ENCODE measurements at regions of chr4 and their contacts with region 1.

Region 1: DNA sequence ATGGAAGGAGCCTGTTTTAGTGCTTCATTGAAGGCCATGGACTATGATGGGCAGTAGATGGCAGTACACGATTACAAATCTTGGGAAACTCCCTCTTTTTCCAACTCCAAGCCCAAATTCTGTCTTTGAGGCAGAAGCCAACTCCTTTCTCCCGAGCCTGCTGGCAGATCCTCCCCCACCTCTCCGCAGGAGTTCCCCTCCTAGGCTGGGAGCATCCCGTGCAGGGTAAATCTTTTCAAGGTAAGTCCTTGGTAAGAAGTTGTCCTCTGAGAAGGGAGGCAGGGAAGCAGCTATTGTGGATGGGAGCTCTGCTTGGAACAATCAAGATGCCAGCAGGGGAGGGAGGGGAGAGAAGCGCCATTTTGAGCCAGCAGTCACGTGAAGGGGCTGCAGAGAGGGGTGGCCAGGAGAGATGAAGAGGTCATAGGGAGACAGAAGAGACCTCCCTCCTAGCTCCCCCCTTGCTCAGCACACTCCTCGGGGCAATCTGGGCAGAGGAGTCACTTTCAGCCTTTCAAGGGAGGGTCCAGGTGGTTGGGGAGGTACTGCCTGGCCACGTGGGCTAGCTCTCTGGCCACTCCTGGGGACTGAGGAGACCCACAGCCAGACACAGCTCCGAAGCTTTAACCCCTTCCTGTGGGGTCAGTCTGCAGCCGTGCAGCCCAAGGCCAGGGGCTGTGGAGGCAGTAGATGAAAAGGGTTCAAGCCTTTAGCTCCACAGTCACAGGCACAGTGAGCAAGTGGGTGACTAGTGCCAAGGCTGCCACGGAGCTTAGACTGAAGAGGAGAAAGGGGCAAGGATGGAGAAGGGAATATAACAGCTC is 9.6 kb downstream of the CC2D2A start:
- DNase-seq: peak; percentile 81 to 82
- H3K4me3 ChIP-seq: peak overlapping the region; percentile 37
- H3K4me3 Mint-ChIP-seq: peak overlapping the region; percentile 97
- H3K27ac Mint-ChIP-seq: peak overlapping the region; percentile 96
- H3K4me1 ChIP-seq: no peaks in the 10 kb centered on the region
- H3K4me1 Mint-ChIP-seq: peaks cover 7% of the 10 kb centered on the region
- H3K27me3 ChIP-seq: no peaks in the 10 kb centered on the region
- H3K27me3 Mint-ChIP-seq: no peaks in the 10 kb centered on the region
- CTCF ChIP-seq: peak; percentile 50 to 60

Region 2: DNA sequence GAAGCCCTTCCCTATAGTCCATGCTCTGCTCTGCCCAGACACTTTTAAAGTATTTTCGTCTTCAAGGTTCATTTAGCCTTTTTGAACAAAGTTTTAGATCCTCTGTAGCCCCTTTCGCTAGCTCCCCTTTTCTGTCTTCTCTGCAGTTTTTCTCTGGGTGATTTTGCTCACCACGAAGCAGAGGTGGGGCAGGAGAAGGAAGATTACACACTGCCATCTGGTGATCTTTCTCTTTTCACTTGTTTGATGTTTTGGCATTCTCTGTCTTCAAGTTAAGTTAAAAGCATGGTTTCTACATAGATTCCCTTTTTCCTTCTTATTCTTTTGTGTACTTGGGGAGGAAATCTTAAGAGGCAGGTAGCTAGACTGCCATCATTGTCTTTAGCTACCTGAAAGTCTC is 34.2 kb after region 1 on chr4:
- CTCF ChIA-PET with region 1: interaction called, 4 read pairs
- POLR2A ChIA-PET with region 1: no interaction called
- intact Hi-C with region 1: loop called (anchors 1 kb)
- DNase-seq: no peak
- H3K4me3 ChIP-seq: no peak overlapping the region
- H3K4me3 Mint-ChIP-seq: no peak overlapping the region
- H3K27ac Mint-ChIP-seq: no peak overlapping the region
- H3K4me1 ChIP-seq: no peaks in the 10 kb centered on the region
- H3K4me1 Mint-ChIP-seq: no peaks in the 10 kb centered on the region
- H3K27me3 ChIP-seq: no peaks in the 10 kb centered on the region
- H3K27me3 Mint-ChIP-seq: no peaks in the 10 kb centered on the region
- CTCF ChIP-seq: no peak

Region 3: GRCh38 chr4:15649914-15650545 is 170.7 kb after region 1 on chr4:
- CTCF ChIA-PET with region 1: interaction called, 14 read pairs
- POLR2A ChIA-PET with region 1: interaction called, 7 read pairs
- intact Hi-C with region 1: loop called (anchors 1 kb)
- DNase-seq: peak; percentile 60 to 69
- H3K4me3 ChIP-seq: no peak overlapping the region
- H3K4me3 Mint-ChIP-seq: no peak overlapping the region
- H3K27ac Mint-ChIP-seq: no peak overlapping the region
- H3K4me1 ChIP-seq: peaks cover 8% of the 10 kb centered on the region
- H3K4me1 Mint-ChIP-seq: peaks cover 8% of the 10 kb centered on the region
- H3K27me3 ChIP-seq: no peaks in the 10 kb centered on the region
- H3K27me3 Mint-ChIP-seq: no peaks in the 10 kb centered on the region
- CTCF ChIP-seq: peak; percentile 47 to 72

Region 4: DNA sequence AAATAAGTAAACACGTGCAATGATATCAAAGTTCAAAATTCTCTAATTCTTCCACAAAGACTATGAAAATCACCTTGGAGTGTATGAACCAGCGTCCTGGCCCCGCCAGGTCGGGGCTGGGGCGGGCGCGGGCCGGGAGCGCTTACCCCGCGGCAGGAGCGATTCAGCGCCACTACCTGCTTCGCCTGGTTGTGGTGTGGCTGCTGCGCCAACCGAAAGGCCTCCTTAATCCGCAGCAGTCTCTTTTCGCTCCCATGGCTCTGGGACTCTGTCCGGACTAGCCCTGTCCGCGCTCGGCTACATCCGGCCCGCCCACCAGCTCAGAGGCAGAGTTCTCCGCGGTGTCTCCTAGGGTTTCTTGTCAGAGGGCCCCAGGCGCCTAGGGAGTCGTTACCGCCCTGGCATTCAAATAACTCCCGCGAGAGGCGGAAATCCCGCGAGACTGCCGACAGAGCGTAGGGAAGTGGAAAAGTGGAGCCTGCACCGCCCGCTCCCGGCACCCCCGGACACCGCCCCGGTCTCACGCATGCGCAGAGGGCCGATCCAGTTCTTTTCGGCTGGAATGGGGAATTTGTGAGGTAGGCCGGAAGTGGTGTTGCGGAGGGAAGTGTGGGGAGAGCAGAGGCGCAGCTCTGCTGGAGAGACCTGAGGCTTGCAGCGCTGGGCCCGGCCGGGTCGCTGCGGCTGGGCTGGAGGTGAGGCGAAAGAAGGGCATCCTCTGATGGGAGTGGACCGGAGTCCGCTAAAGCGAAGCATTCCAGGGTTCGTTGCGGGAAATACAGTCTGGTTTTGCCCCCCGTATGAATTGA is 202.1 kb after region 1 on chr4 and contains the start of gene FAM200B:
- CTCF ChIA-PET with region 1: interaction called, 5 read pairs
- POLR2A ChIA-PET with region 1: interaction called, 3 read pairs
- intact Hi-C with region 1: loop called (anchors 1 kb)
- DNase-seq: peak; percentile 99 to 100
- H3K4me3 ChIP-seq: peak within 1 kb of the TSS; percentile 72
- H3K4me3 Mint-ChIP-seq: peak within 1 kb of the TSS; percentile 95
- H3K27ac Mint-ChIP-seq: peak within 1 kb of the TSS; percentile 97
- H3K4me1 ChIP-seq: peaks cover 36% of the 10 kb centered on the region
- H3K4me1 Mint-ChIP-seq: peaks cover 36% of the 10 kb centered on the region
- H3K27me3 ChIP-seq: no peaks in the 10 kb centered on the region
- H3K27me3 Mint-ChIP-seq: no peaks in the 10 kb centered on the region
- CTCF ChIP-seq: no peak
- total RNA-seq, gene FAM200B: 15.5 and 16.6 TPM in 2 replicates

Region 5: DNA sequence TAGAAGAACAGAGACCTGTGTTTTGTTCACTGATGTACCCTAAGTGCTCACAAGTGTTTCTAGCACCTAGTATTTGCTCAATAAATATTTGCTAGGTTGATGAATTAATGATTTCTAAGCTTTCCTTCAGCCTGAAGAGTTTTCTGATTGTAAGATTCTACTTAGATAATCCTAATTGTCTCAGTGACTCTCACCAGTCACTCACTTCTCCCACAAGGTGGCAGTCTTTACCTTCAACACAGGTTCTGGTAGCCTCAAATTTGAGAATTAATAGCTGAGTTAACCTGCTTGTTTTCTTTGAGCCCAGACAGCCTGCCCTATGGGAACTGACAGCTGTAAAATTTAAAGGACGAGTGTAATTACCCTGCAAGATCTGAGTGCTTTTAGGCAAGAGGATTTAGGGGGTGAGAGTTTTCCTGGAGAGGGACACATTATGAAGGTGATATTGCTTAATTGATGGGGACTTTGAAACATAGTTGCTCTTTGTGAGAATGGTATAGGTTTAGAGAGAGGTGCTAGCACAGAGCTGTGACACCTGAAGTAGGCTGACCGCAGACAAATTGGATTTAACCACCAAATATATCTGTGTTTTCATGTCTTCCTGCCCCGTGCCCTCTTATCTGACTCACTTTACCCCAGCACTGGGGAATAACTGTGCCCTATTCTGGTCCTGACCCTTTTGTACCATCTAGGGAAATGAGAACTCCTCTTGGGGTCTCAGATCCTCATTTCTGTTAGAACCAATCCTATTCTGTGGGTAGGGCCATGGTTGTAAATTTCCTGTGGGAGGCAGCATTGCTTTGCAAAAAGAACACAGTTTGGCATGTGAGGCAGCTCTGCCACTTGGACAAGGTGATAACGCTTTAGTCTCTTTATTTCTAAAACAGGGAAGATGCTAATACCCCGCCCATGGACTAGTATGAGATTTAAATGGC is 326.5 kb after region 1 on chr4:
- CTCF ChIA-PET with region 1: interaction called, 15 read pairs
- POLR2A ChIA-PET with region 1: no interaction called
- intact Hi-C with region 1: loop called (anchors 1 kb)
- DNase-seq: peak in 1 of 2 experiments; percentile 52
- H3K4me3 ChIP-seq: no peak overlapping the region
- H3K4me3 Mint-ChIP-seq: no peak overlapping the region
- H3K27ac Mint-ChIP-seq: no peak overlapping the region
- H3K4me1 ChIP-seq: no peaks in the 10 kb centered on the region
- H3K4me1 Mint-ChIP-seq: peaks cover 9% of the 10 kb centered on the region
- H3K27me3 ChIP-seq: no peaks in the 10 kb centered on the region
- H3K27me3 Mint-ChIP-seq: peaks cover 5% of the 10 kb centered on the region
- CTCF ChIP-seq: peak; percentile 65 to 72

Region 6: DNA sequence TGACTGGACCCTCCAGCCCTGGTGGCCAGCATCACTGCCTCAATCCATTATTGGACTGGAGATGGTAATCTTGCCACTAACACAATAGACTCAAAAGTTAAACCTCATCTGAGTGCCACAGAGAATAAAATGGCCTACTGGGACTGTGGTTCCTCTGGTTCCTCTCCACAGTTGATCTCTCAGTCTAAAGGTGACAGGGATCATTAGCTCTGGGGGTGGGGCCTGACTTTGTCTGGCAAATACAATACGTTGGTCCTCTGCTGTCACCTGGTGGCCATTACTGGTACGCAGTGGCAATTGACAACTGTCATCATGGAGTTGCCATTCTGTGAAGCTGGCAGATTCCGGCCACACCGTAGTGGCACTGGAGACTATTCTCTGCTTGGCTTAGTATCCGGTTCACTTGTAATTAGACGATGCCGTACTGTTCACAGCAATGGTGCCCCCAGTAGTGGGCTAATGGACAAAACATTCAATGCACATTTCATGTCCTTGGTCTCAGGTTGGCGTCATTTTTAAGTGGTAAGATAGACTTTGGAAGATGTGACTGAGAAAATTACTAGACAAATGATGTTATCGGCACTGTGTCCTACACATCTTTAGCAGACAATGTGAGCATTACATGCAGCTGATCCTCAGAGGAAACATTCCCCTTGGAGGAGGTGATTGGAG is 477.0 kb after region 1 on chr4:
- CTCF ChIA-PET with region 1: interaction called, 15 read pairs
- POLR2A ChIA-PET with region 1: no interaction called
- intact Hi-C with region 1: loop called (anchors 1 kb)
- DNase-seq: peak; percentile 80 to 81
- H3K4me3 ChIP-seq: no peak overlapping the region
- H3K4me3 Mint-ChIP-seq: no peak overlapping the region
- H3K27ac Mint-ChIP-seq: no peak overlapping the region
- H3K4me1 ChIP-seq: peaks cover 8% of the 10 kb centered on the region; the same call in 1 of the 2 replicates
- H3K4me1 Mint-ChIP-seq: peaks cover 5% of the 10 kb centered on the region
- H3K27me3 ChIP-seq: no peaks in the 10 kb centered on the region
- H3K27me3 Mint-ChIP-seq: no peaks in the 10 kb centered on the region
- CTCF ChIP-seq: peak; percentile 85 to 86